ENCODE measurements at regions of chr1 and their contacts with region 1.

Region 1: DNA sequence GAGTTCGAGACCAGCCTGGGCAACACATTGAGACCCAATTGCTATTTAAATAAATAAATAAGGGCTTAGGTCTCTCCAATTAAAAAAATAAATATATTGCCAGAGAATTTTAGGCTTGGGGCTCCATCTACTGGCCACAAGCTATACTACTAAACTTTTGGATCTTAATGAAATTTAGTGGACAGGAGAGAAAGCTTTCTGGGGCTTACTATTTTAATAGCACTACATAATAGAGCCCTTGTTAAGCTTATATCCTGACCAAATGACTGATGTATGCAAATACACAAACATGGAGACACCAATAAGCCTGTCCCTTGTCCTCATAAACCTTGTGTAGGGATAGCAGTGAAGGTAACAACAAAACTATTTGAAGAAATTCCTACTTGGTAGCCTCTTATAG is 18.4 kb downstream of the CCT3 start:
- DNase-seq: no peak
- ATAC-seq: no peak
- H3K4me3 ChIP-seq: no peak overlapping the region
- H3K27ac ChIP-seq: no peak overlapping the region
- H3K4me1 ChIP-seq: no peaks in the 10 kb centered on the region
- H3K27me3 ChIP-seq: no peaks in the 10 kb centered on the region
- CTCF ChIP-seq: peak; percentile 23 to 62 (median 46)
- POLR2A ChIP-seq: no peak

Region 2: GRCh38 chr1:155911156-155912055 is 408.3 kb before region 1 on chr1 and contains the start of gene RIT1:
- intact Hi-C with region 1: loop called in 1 of 10 experiments (anchors 10 kb)
- DNase-seq: peak; percentile 90 to 94 (median 91)
- ATAC-seq: peak; percentile 97 to 99 (median 99)
- H3K4me3 ChIP-seq: peak within 1 kb of the TSS; percentile 65 to 97 (median 80)
- H3K27ac ChIP-seq: peak within 1 kb of the TSS; percentile 80 to 95 (median 92)
- H3K4me1 ChIP-seq: peaks cover 0 to 22% (median 10%) of the 10 kb centered on the region in 12 donors
- H3K27me3 ChIP-seq: no peaks in the 10 kb centered on the region
- CTCF ChIP-seq: peak in 2 of 12 donors; percentile 4 to 13
- POLR2A ChIP-seq: peak in 1 of 2 donors; percentile 63
- total RNA-seq, gene RIT1: 15.1 to 33.3 (median 20.0) TPM

Region 3: DNA sequence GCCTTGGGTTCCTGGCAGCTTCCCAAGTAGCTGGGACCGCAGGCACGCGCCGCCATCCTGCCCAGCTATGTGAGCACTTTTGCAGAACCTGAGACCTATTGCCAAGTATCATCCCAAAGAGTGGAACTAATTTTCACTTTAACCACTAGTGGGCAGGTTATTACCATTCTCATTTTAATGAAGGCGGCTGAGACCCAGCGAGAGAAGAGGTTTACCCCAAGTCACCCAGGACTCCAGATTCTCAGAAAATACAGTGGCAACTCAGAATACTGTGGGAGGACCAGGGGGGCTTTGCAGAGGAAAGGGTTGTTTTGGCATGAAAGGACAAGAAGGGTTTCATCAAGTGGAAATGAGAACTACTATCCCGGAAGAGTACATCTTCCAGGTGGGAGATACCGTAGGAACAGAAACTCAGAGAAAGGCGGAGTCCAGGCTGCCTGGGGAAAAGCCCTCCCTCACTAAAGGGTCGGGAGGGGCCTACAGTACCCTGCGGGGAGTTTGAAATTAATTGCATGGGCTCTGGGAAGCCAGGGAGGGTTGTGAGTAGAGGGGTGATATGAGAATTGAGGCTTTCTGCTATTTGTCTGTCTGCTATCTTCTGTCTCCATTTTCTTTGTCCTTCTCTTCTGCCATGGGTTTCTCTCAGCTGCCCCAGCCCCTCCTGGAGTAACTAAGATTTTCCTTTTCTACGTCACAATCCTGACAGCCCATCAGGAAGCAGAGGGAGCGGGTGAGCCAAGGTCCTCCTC is 173.5 kb before region 1 on chr1:
- intact Hi-C with region 1: loop called in 5 of 10 experiments (anchors 5 to 10 kb)
- DNase-seq: peak; percentile 77 to 88 (median 82)
- ATAC-seq: peak; percentile 45 to 68 (median 54)
- H3K4me3 ChIP-seq: peak overlapping the region in 3 of 12 donors; percentile 5 to 23 (median 11)
- H3K27ac ChIP-seq: peak overlapping the region in 1 of 12 donors; percentile 18
- H3K4me1 ChIP-seq: peaks cover 5 to 52% (median 17%) of the 10 kb centered on the region in 12 donors
- H3K27me3 ChIP-seq: peaks cover 0 to 19% (median 2%) of the 10 kb centered on the region in 9 donors
- CTCF ChIP-seq: peak; percentile 54 to 77 (median 67)
- POLR2A ChIP-seq: no peak

Region 4: GRCh38 chr1:156245451-156246232 is 74.0 kb before region 1 on chr1:
- intact Hi-C with region 1: loop called in 2 of 10 experiments (anchors 10 kb)
- DNase-seq: no peak
- ATAC-seq: peak in 2 of 4 donors; percentile 2 to 3
- H3K4me3 ChIP-seq: peak overlapping the region; percentile 9 to 50 (median 31)
- H3K27ac ChIP-seq: no peak overlapping the region
- H3K4me1 ChIP-seq: peaks cover 3 to 47% (median 26%) of the 10 kb centered on the region in 12 donors
- H3K27me3 ChIP-seq: peaks cover 0 to 17% (median 14%) of the 10 kb centered on the region in 9 donors
- CTCF ChIP-seq: no peak
- POLR2A ChIP-seq: no peak

Region 5: DNA sequence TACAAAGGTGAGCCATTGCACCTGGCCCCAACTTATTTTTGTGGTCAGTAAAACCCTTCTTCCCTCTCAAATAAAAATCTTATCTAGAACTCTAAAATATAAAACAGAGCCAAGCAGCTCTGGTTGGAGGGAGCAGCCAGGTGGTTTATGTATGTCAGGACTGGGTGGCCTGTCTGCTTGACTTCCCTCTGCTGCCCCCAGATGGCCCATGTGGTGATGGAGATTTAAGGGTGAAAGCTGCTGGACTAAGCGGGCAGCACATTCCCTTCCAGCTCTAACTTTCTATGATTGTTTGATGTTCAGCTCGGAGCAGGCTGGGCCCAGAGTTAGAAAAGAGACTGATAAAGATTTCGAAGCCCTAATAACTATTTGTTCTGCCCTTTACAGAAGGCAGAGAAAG is 59.9 kb before region 1 on chr1:
- intact Hi-C with region 1: loop called in 1 of 10 experiments (anchors 10 kb)
- DNase-seq: no peak
- ATAC-seq: no peak
- H3K4me3 ChIP-seq: no peak overlapping the region
- H3K27ac ChIP-seq: no peak overlapping the region
- H3K4me1 ChIP-seq: no peaks in the 10 kb centered on the region
- H3K27me3 ChIP-seq: no peaks in the 10 kb centered on the region
- CTCF ChIP-seq: no peak
- POLR2A ChIP-seq: no peak

Region 6: DNA sequence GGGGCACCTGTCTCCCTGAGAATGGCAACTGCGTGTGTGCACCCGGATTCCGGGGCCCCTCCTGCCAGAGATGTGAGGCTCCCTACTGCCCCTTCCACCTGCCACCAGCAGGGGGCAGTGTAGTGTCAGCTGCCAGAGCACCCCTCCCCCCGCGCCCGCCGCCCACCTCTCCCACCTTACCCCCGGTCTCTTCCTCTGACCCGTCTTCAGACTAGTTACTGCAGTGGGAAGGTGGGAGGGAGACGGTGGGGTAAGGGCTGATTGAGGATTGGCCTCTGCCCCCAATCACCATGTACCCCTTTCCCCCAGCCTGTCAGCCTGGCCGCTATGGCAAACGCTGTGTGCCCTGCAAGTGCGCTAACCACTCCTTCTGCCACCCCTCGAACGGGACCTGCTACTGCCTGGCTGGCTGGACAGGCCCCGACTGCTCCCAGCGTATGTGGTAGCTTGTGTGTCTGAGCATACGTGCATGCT is 590.7 kb after region 1 on chr1:
- intact Hi-C with region 1: no loop called
- DNase-seq: peak in 1 of 5 donors; percentile 60
- ATAC-seq: peak in 2 of 4 donors; percentile 17 to 30
- H3K4me3 ChIP-seq: no peak overlapping the region
- H3K27ac ChIP-seq: no peak overlapping the region
- H3K4me1 ChIP-seq: peaks cover 0 to 42% (median 12%) of the 10 kb centered on the region in 12 donors
- H3K27me3 ChIP-seq: peaks cover 0 to 27% (median 0%) of the 10 kb centered on the region in 9 donors
- CTCF ChIP-seq: peak; percentile 66 to 87 (median 80)
- POLR2A ChIP-seq: no peak

Measured in heart left ventricle (tissue), 16 donors.